PC-3 (cell line): ENCODE measurements at regions of chr9 and their contacts with region 1.

Region 1: GRCh38 chr9:105117234-105117633 is 127.2 kb upstream of the SLC44A1 start:
- DNase-seq: no peak
- ATAC-seq: no peak
- H3K4me3 ChIP-seq: no peak overlapping the region
- H3K27ac ChIP-seq: no peak overlapping the region
- H3K4me1 ChIP-seq: peaks cover 8% of the 10 kb centered on the region; the same call in 1 of the 2 replicates
- H3K27me3 ChIP-seq: no peaks in the 10 kb centered on the region
- CTCF ChIP-seq: no peak

Region 2: GRCh38 chr9:105026451-105026850 is 90.8 kb before region 1 on chr9:
- CTCF ChIA-PET with region 1: no interaction called
- POLR2A ChIA-PET with region 1: interaction called, 17 read pairs
- intact Hi-C with region 1: no loop called
- DNase-seq: peak; percentile 21
- ATAC-seq: peak; percentile 55; the same call in 1 of the 2 replicates
- H3K4me3 ChIP-seq: no peak overlapping the region
- H3K27ac ChIP-seq: no peak overlapping the region
- H3K4me1 ChIP-seq: no peaks in the 10 kb centered on the region
- H3K27me3 ChIP-seq: no peaks in the 10 kb centered on the region
- CTCF ChIP-seq: no peak

Region 3: DNA sequence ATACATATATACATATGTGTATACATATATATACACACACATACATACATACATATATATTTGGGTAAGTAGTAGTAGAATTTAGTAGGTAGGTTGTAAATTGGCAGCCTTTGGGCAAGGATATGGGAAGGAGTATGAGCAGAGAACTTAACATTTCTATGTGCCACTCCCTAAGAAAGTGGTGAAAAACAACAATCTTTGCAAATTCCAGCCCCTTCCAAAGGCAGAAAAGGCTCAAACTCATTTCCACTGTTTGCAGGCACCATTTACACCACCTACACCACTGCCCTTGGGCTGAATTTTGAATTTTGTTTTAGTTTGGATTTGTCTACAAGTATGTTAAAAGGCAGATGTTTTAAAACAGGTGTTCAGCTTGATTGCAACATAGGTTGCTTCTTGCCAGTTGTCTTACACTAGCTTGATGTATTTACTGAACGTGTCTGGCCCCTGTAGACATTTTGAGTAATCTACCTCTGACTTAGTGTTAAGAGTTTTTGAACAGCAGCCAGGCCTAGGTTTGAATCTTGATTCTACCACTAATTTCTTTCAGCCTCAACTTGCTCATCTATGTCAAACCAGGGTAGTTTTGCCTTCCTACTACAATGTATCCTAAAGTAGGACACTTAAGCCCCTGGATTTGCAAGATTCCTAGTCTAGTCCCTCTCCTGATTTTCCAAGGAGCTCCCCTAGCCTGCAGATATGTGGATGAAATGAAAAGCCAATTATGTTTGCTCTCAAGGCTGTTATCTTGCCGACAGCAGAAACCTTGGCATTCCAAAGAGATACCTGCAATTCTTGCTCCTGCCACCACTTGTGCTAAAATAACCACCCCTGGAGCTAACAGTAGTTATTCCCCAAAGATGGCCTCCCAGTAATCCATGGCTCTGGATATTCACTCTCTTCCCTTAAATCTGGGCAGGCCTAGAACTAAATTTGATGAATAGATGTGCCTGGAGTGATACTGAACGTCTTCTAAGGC is 29.0 kb before region 1 on chr9:
- CTCF ChIA-PET with region 1: no interaction called
- POLR2A ChIA-PET with region 1: no interaction called
- intact Hi-C with region 1: no loop called
- DNase-seq: peak; percentile 38
- ATAC-seq: peak; percentile 51; the same call in 1 of the 2 replicates
- H3K4me3 ChIP-seq: no peak overlapping the region
- H3K27ac ChIP-seq: no peak overlapping the region
- H3K4me1 ChIP-seq: no peaks in the 10 kb centered on the region; the same call in 1 of the 2 replicates
- H3K27me3 ChIP-seq: no peaks in the 10 kb centered on the region
- CTCF ChIP-seq: no peak